ENCODE measurements at regions of chr5 and their contacts with region 1.

Region 1: GRCh38 chr5:159120446-159120845 is 20.7 kb upstream of the EBF1 start:
- DNase-seq: no peak
- ATAC-seq: no peak
- H3K4me3 ChIP-seq: peak overlapping the region in 2 of 12 donors; percentile 13 to 26
- H3K27ac ChIP-seq: peak overlapping the region in 1 of 12 donors; percentile 60
- H3K4me1 ChIP-seq: peaks cover 0 to 10% (median 0%) of the 10 kb centered on the region in 12 donors
- H3K27me3 ChIP-seq: no peaks in the 10 kb centered on the region
- CTCF ChIP-seq: no peak
- POLR2A ChIP-seq: no peak

Region 2: DNA sequence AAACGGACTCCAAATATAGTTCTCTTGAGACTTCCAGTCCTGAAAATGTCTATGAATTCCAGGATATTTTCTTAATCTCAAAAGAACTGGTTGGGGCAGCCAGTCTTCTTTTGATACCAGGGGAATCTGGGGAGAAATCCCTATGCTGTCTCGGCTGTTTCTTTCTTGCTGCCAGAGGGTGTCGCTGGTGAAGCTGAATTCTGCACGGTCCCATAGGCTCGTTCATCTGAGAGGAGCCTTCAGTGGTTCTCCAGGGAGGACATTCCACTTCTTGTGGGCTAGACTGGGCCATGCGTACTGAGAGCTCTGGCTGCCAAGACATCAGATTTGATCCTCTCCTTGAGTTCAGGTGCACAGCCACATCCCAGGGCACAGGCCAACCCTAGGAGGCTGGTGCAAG is 1106.5 kb before region 1 on chr5:
- intact Hi-C with region 1: loop called in 1 of 10 experiments (anchors 10 kb)
- DNase-seq: peak in 3 of 5 donors; percentile 20 to 30 (median 28)
- ATAC-seq: peak; percentile 50 to 58 (median 51)
- H3K4me3 ChIP-seq: no peak overlapping the region
- H3K27ac ChIP-seq: no peak overlapping the region
- H3K4me1 ChIP-seq: peaks cover 0 to 5% (median 0%) of the 10 kb centered on the region in 12 donors
- H3K27me3 ChIP-seq: peaks cover 0 to 2% (median 0%) of the 10 kb centered on the region in 9 donors
- CTCF ChIP-seq: peak in 11 of 12 donors; percentile 16 to 57 (median 38)
- POLR2A ChIP-seq: no peak

Region 3: GRCh38 chr5:158785397-158785796 is 335.0 kb before region 1 on chr5:
- intact Hi-C with region 1: no loop called
- DNase-seq: no peak
- ATAC-seq: no peak
- H3K4me3 ChIP-seq: no peak overlapping the region
- H3K27ac ChIP-seq: peak overlapping the region in 4 of 12 donors; percentile 14 to 21 (median 20)
- H3K4me1 ChIP-seq: peaks cover 0 to 42% (median 0%) of the 10 kb centered on the region in 12 donors
- H3K27me3 ChIP-seq: no peaks in the 10 kb centered on the region
- CTCF ChIP-seq: no peak
- POLR2A ChIP-seq: no peak

Region 4: DNA sequence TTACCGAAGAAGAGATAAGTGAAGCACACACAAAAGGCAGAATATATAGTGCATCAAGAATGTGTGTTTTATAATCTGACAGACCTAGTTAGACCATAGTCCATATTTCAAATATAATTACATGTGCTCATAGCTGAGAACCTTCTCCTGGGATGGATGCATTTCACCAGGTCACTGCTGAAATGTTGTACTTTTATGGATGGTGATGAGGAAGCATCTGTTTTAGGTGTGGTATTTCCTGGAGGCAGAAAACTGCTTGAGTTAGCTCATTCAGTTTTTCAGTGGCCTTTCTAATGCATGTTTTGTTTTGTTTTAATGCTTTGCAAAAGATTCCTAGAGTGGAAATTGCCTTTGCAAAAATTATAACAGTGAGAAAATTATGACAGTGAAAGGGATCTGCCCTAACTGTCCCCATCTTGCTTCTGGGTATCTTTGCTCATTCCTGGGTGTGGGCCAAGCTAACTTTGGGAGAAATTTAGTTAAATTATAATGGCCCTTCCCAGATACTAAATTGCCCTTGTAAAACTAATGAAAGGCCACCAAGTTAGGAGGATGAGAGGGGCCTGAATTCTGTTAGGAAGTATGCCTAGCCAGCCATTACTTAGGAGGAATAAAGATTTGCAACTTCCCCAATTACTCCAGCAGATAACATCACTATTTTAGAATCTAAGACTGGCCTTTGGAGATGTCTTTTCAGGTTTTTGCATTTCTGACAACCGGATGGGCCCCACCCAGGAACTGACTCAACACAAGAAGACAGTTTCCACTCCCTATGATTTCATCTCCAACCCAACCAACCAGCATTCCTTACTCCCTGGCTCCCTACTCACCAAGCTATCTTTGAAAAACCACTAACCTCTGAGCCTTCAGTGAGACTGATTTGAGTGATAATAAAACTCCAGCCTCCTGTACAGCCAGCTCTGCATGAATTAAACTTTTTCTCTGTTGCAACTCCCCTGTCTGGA is 216.8 kb after region 1 on chr5:
- intact Hi-C with region 1: no loop called
- DNase-seq: no peak
- ATAC-seq: peak in 2 of 4 donors; percentile 53 to 65
- H3K4me3 ChIP-seq: no peak overlapping the region
- H3K27ac ChIP-seq: peak overlapping the region in 4 of 12 donors; percentile 13 to 58 (median 39)
- H3K4me1 ChIP-seq: peaks cover 0 to 33% (median 5%) of the 10 kb centered on the region in 12 donors
- H3K27me3 ChIP-seq: no peaks in the 10 kb centered on the region
- CTCF ChIP-seq: no peak
- POLR2A ChIP-seq: no peak